ENCODE measurements at regions of chr10 and their contacts with region 1.

Region 1: DNA sequence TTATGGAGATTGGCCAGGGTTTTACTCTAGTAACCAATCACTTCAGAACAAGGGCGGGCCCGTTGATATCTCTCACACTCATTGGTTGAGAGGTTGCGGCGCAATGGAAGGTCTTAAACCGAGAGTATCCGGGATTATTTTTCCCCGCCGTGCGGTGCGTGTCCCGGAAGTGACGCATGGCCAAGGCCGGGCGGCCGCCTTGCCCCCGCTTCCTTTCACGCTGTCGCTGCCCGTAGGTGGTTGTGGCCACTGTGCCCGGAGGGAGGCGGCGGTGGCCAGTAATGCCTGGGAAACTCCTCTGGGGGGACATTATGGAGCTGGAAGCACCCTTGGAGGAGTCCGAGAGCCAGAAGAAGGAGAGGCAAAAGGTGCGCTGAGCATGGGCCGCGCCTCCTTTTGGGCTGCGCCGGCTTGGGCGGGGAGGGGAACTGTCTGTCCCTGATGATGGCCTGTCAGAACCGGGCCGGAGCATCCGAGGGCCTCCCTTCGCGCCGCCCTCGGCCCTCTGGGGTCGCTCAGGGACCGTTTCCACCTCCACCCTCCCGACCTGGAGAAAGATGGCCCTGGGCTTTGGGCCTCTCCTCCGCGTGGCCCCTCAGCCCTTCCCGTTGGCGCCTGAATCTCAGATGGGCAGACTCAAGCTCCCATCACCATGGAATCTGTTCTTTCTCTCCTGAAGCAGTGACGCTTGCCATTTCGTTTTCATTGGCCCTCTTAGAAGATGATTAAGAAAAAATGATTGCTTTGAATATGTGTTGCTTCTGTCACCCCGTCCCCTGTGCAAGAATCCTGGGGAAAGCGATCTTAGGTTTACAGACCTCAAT is at the start of gene DDX50:
- DNase-seq: peak; percentile 87 to 98 (median 92)
- ATAC-seq: peak; percentile 97
- H3K4me3 ChIP-seq: peak within 1 kb of the TSS; percentile 99
- H3K4me3 Mint-ChIP-seq: peak within 1 kb of the TSS; percentile 99
- H3K27ac ChIP-seq: peak within 1 kb of the TSS; percentile 100
- H3K27ac Mint-ChIP-seq: peak within 1 kb of the TSS; percentile 100
- H3K4me1 ChIP-seq: peaks cover 41% of the 10 kb centered on the region
- H3K4me1 Mint-ChIP-seq: peaks cover 61% of the 10 kb centered on the region
- H3K27me3 ChIP-seq: no peaks in the 10 kb centered on the region
- H3K27me3 Mint-ChIP-seq: no peaks in the 10 kb centered on the region
- CTCF ChIP-seq: no peak
- total RNA-seq, gene DDX50: 46.8 to 47.5 TPM

Region 2: DNA sequence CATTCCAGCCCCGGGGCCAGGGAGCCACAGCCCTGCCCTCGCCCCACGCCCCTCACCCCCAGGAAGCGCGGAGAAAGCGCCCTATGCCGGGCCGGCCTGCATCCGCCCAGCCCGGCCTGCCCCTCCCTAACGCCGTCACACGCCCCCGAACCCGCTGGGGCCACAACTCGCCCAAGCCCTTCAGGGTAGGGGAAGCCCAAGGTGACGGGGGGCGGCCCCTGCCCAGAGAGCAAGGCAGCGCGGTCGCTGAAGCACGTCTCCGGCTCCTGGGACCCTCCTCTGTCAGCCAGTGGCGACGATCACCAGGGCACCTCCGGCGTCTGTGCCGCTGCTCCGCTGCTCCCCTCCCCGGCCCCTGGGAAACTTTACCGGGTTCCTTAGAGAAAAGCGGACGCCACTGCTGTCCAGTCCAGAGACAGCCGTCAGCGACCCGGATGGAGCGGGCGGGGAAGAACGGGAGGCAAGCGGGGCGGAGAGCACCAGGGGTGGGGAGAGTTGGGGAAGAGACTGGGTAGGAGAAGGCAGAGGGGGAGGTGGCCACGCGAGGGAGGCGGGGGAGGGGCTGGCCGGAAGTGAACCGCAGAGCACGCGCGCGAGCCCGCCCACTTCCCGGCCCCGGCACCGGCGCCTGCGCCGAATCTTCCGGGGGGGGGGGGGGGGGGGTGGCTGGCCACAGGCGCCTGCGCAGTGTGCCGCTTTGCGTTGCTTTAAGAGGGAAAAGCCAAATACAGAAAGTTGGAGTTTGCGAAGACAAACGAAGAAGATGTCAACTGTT is 826.4 kb before region 1 on chr10 and contains the start of gene HERC4:
- CTCF ChIA-PET with region 1: no interaction called
- POLR2A ChIA-PET with region 1: no interaction called
- intact Hi-C with region 1: loop called in 1 of 2 experiments (anchors 10 kb)
- DNase-seq: peak; percentile 84 to 97 (median 90)
- ATAC-seq: peak; percentile 92
- H3K4me3 ChIP-seq: peak within 1 kb of the TSS; percentile 88
- H3K4me3 Mint-ChIP-seq: peak within 1 kb of the TSS; percentile 93
- H3K27ac ChIP-seq: peak within 1 kb of the TSS; percentile 94
- H3K27ac Mint-ChIP-seq: peak within 1 kb of the TSS; percentile 89
- H3K4me1 ChIP-seq: peaks cover 6% of the 10 kb centered on the region
- H3K4me1 Mint-ChIP-seq: peaks cover 47% of the 10 kb centered on the region
- H3K27me3 ChIP-seq: no peaks in the 10 kb centered on the region
- H3K27me3 Mint-ChIP-seq: no peaks in the 10 kb centered on the region
- CTCF ChIP-seq: no peak
- total RNA-seq, gene HERC4: 46.0 to 46.8 TPM

Region 3: DNA sequence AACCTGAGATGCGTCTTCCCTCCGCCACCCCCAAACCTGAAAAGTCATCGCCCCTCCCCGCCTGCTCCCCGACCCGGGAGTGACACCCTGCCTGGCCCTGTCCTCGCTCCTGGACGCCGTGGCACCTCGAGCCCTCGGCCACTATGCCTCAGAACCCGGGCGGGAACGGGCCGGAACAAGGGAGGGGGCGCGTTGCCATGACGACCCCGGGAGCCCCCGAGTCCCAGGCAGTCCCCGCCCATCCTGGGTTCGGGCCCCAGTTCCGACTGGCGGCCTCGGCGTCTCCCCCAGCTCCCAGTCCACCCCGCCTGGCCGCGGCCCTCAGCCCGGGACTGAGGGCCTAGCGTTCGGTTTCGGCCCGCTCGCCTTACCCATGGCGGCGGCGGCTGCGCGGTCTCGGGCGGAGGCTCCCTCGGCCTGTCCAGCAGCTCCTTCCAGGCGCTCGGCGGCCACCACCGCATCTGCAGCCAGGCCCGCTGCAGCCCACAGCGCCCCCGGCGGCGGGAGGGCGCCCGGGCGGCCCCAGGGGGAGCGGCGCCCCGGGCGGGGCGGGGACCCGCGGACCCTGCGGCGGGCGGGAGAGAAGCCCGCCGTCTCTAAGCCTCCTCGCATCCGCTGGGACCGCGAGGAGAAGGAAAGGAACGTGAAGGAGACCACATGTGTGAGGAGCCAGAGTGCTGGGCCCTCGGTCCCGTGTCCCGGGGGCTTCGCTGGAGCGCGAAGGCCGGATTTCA is 494.3 kb before region 1 on chr10 and contains the start of gene RUFY2:
- CTCF ChIA-PET with region 1: no interaction called
- POLR2A ChIA-PET with region 1: no interaction called
- intact Hi-C with region 1: loop called in 1 of 2 experiments (anchors 5 kb)
- DNase-seq: peak; percentile 42 to 88 (median 70)
- ATAC-seq: peak; percentile 94
- H3K4me3 ChIP-seq: peak within 1 kb of the TSS; percentile 99
- H3K4me3 Mint-ChIP-seq: peak within 1 kb of the TSS; percentile 89
- H3K27ac ChIP-seq: peak within 1 kb of the TSS in 1 of 2 donors; percentile 35
- H3K27ac Mint-ChIP-seq: peak within 1 kb of the TSS; percentile 53
- H3K4me1 ChIP-seq: peaks cover 11% of the 10 kb centered on the region
- H3K4me1 Mint-ChIP-seq: peaks cover 18% of the 10 kb centered on the region
- H3K27me3 ChIP-seq: no peaks in the 10 kb centered on the region
- H3K27me3 Mint-ChIP-seq: no peaks in the 10 kb centered on the region
- CTCF ChIP-seq: peak; percentile 57
- total RNA-seq, gene RUFY2: 10.7 to 14.8 TPM

Region 4: GRCh38 chr10:68720793-68721672 is 180.3 kb before region 1 on chr10 and contains the start of gene CCAR1:
- CTCF ChIA-PET with region 1: no interaction called
- POLR2A ChIA-PET with region 1: interaction called, 3 read pairs
- intact Hi-C with region 1: loop called in 1 of 2 experiments (anchors 2 kb)
- DNase-seq: peak; percentile 92 to 99 (median 96)
- ATAC-seq: peak; percentile 94
- H3K4me3 ChIP-seq: peak within 1 kb of the TSS; percentile 93
- H3K4me3 Mint-ChIP-seq: peak within 1 kb of the TSS; percentile 100
- H3K27ac ChIP-seq: peak within 1 kb of the TSS; percentile 85 to 89
- H3K27ac Mint-ChIP-seq: peak within 1 kb of the TSS; percentile 98
- H3K4me1 ChIP-seq: peaks cover 16% of the 10 kb centered on the region
- H3K4me1 Mint-ChIP-seq: peaks cover 16% of the 10 kb centered on the region
- H3K27me3 ChIP-seq: no peaks in the 10 kb centered on the region
- H3K27me3 Mint-ChIP-seq: no peaks in the 10 kb centered on the region
- CTCF ChIP-seq: no peak
- total RNA-seq, gene CCAR1: 68.9 to 82.2 TPM

Region 5: DNA sequence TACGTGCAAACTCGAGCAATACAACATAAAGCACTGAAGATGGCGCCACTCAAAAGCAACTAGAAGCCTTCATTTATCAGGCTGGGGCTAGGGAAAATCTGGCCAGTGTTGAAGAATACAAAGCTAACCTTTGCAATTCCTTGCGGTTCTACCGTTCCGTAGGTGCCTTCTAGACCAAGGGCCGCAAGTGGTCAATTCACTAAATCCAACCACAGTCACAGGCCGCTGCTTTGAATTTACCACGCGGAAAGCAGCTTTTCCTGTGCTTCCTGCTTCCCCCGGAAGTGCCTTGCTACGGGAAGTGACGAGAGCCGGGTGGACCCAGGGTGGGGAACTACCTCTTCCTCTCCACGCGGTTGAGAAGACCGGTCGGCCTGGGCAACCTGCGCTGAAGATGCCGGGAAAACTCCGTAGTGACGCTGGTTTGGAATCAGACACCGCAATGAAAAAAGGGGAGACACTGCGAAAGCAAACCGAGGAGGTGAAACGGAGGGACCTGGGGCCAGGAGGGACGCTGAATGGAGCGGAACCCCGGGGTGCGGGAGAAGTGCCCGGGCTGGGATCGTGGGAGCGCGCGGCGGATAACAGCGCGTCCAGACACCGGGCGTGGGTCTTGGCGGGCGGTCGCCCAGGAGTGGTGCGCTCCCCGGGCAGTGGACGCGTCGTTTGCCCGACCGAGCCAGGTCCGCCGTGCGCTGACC is 54.7 kb after region 1 on chr10 and contains the start of gene DDX21:
- CTCF ChIA-PET with region 1: interaction called, 3 read pairs
- POLR2A ChIA-PET with region 1: interaction called, 24 read pairs
- intact Hi-C with region 1: loop called in 1 of 2 experiments (anchors 1 kb)
- DNase-seq: peak; percentile 73 to 95 (median 82)
- ATAC-seq: peak; percentile 80
- H3K4me3 ChIP-seq: peak within 1 kb of the TSS; percentile 97
- H3K4me3 Mint-ChIP-seq: peak within 1 kb of the TSS; percentile 95
- H3K27ac ChIP-seq: peak within 1 kb of the TSS; percentile 98 to 100
- H3K27ac Mint-ChIP-seq: peak within 1 kb of the TSS; percentile 94
- H3K4me1 ChIP-seq: peaks cover 45% of the 10 kb centered on the region
- H3K4me1 Mint-ChIP-seq: peaks cover 44% of the 10 kb centered on the region
- H3K27me3 ChIP-seq: no peaks in the 10 kb centered on the region
- H3K27me3 Mint-ChIP-seq: no peaks in the 10 kb centered on the region
- CTCF ChIP-seq: peak; percentile 87
- total RNA-seq, gene DDX21: 120 to 121 TPM

Measured in CD4-positive, alpha-beta T cell (primary cell).